CD14-positive monocyte (primary cell): ENCODE measurements at regions of chr16 and their contacts with region 1.

Region 1: GRCh38 chr16:3013998-3014690 is 1.4 kb downstream of the CLDN9 start:
- DNase-seq: no peak
- H3K4me3 ChIP-seq: no peak overlapping the region
- H3K4me3 Mint-ChIP-seq: peak overlapping the region in 1 of 2 donors; percentile 55
- H3K27ac ChIP-seq: no peak overlapping the region
- H3K27ac Mint-ChIP-seq: no peak overlapping the region
- H3K4me1 ChIP-seq: peaks cover 12 to 20% of the 10 kb centered on the region in 2 donors
- H3K4me1 Mint-ChIP-seq: peaks cover 19% of the 10 kb centered on the region
- H3K27me3 ChIP-seq: peaks cover 0 to 50% of the 10 kb centered on the region in 2 donors
- H3K27me3 Mint-ChIP-seq: peaks cover 43 to 64% (median 49%) of the 10 kb centered on the region in 3 donors
- CTCF ChIP-seq: no peak

Region 2: DNA sequence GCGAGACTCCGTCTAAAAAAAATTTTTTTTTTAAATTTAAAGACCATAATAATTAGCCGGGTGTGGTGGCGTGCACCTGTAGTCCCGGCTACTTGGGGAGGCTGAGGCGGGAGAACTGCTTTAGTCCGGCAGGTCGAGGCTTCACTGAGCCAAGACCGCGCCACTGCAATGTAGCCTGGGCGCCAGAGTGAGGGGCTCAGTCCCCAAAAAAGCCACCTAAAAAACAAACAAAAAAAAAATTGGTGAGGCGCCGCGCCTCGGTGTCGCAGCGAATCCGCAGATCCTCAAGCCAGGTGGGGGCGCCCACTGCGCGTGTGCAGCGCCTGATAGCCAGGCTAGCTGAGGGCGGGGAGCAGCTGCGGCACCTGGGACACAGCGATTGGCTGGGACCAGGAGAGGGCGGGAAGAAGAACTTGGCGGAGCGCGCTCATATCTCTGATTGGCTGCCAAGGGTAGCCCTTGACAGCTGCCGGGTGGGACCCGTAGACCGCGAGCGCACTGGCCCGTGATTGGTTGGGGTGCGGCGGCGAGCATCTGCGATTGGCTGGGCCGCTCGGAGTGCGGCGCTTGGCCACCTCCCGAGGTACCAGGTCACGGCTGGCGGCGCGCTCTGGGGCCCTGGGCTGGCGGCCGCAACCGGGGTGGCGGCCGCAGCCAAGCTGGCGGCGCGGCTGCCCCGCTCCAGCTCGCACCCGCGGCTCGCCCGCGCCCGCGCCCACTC is 10.4 kb before region 1 on chr16:
- intact Hi-C with region 1: loop called in 1 of 2 experiments (anchors 2 kb)
- DNase-seq: peak; percentile 98 to 99 (median 98)
- H3K4me3 ChIP-seq: no peak overlapping the region
- H3K4me3 Mint-ChIP-seq: peak overlapping the region; percentile 42 to 64
- H3K27ac ChIP-seq: no peak overlapping the region
- H3K27ac Mint-ChIP-seq: no peak overlapping the region
- H3K4me1 ChIP-seq: peaks cover 40 to 41% of the 10 kb centered on the region in 2 donors
- H3K4me1 Mint-ChIP-seq: peaks cover 38% of the 10 kb centered on the region
- H3K27me3 ChIP-seq: peaks cover 0 to 2% of the 10 kb centered on the region in 2 donors
- H3K27me3 Mint-ChIP-seq: peaks cover 0 to 21% (median 17%) of the 10 kb centered on the region in 3 donors
- CTCF ChIP-seq: peak; percentile 34